PC-3 (cell line): ENCODE measurements at regions of chr12 and their contacts with region 1.

Region 1: DNA sequence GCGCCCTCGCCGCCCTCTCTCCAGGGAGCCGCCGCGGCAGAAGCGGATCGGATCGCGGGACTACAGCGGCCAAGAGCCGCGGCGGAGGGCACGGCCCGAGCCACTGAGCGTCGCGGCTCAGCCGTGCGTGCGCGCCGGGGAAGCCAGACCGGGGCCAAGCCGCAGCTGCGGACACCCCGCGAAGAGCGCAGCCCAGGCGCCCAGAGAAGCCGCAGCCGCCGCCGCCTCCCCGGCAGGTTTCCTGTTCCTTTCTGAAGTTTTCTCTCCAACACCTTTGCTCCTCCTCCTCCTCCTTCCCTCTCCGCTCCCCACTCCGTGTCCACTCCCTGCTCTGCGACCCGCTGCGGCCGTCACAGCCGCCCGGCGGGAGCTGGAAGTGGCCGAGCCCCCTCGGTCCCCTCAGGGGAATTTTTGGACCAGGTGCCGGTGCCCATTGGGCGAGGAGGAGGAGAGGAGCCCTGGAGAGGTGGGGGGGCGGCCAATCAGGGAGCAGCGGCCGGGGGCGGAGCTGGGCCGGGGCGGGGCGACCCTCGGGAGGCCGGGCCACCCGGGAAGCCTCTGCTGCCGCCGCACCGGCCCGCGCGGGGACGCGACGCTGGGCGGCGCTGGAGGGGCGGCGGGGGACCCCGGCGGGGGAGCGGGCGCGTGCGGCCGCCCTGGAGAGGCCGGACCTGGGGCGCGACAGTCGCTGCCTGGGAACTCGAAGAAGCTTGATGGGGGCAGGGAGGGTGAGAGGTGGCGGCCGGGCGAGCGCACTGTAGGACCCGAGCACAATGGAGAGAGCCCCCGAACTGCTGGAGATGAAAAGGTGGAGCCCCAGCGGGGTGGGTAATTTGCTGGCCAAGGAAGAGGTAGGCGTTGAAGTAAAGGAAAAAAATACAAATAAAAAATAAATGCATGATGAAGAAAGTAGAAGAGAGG is at the start of gene ITPR2:
- DNase-seq: peak; percentile 97
- ATAC-seq: peak; percentile 85
- H3K4me3 ChIP-seq: peak within 1 kb of the TSS; percentile 81
- H3K27ac ChIP-seq: peak within 1 kb of the TSS; percentile 53
- H3K4me1 ChIP-seq: peaks cover 6% of the 10 kb centered on the region; the same call in 1 of the 2 replicates
- H3K27me3 ChIP-seq: no peaks in the 10 kb centered on the region
- CTCF ChIP-seq: peak; percentile 40; the same call in 1 of the 2 replicates
- total RNA-seq, gene ITPR2: 4.0 and 10.2 TPM in 2 replicates

Region 2: DNA sequence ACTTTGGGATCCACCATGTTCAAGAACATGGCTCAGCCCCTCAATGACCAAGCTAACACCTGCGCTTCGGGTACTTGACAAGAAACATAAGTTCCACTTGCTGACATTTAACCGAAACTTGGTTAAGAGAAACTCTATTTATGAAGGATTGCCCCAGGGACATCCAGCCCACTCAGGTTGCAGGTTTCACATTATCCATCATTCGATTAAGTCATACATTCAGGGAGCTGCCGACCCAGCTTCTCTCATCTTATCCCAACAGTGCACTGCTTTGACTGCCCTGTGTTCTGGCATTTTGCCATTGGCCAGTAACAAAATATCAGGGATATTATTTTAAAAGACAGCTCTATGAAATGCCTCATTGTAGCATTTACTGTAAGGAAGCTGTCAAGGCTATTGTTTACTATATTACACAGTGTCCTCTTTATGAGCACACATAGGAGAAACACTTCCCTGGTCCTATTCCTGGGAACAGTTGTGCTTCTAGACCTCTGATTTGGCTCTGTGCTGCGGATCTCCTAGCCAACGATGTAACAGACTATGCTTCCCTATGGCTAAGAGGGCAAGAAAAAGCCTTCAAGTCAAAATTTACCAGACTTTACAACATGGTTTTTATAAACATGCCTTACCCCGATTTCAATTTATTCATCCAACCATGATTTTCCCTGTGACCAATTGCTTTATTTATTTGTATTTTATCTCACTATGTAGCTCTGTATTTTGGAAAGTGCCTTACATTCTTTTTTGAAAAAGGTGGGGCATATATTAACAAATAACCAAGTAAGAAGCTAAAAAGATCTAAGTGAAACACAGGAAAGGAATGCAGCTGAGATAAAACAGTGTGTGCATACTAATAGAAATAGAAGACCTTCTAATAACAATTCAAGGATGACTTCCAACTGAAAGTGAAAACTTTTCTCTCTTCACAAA is 109.4 kb before region 1 on chr12:
- CTCF ChIA-PET with region 1: interaction called, 5 read pairs
- POLR2A ChIA-PET with region 1: no interaction called
- intact Hi-C with region 1: loop called (anchors 5 kb)
- DNase-seq: peak; percentile 58
- ATAC-seq: peak; percentile 85
- H3K4me3 ChIP-seq: peak overlapping the region; percentile 1; the same call in 1 of the 2 replicates
- H3K27ac ChIP-seq: no peak overlapping the region
- H3K4me1 ChIP-seq: peaks cover 16% of the 10 kb centered on the region
- H3K27me3 ChIP-seq: no peaks in the 10 kb centered on the region
- CTCF ChIP-seq: no peak

Region 3: DNA sequence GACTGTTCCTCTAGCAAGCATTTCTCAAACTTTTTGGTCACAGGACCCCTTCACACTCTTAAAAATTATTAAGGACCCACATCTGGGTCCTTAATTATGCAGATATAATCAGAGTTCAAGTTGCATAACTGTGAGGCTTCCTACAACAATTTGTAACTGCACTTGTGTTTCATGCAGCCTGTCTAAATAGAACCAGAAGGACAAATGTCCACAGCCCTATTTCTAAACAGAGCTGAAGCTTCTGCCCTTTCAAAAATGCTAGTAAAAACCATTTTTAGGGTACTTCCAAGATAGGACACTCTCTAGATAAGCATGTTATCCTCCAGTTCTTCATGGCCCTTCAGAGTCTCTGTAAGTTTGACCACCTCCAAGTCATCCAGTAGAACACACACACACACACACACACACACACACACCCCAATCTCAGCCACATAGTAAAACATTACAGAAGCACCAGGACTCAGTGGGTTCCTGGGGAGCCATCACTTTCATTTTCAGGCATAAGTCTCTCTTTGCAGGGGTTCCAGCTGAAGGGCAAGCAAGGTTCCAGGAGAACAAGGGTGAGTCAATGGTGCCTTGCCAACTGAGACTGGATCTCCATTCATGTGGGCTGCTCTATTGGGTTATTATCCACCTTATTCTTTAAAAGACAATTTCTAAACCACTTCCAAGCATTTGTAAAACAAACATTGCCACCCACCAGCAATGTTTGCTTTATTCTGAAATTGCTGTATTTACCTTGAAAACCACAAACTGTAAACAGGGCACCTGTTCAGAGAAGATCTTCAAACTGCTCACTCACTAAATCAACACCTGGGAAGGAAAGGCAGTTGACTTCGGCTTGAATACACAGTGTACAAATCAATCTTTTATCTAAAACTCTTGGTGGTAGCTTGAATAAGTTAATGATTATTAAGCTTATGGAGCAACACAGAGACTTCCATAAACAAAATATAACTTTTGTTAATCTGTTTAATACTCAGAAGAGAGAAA is 64.2 kb before region 1 on chr12:
- CTCF ChIA-PET with region 1: no interaction called
- POLR2A ChIA-PET with region 1: interaction called, 4 read pairs
- intact Hi-C with region 1: loop called (anchors 2 kb)
- DNase-seq: peak; percentile 97
- ATAC-seq: peak; percentile 97
- H3K4me3 ChIP-seq: no peak overlapping the region
- H3K27ac ChIP-seq: no peak overlapping the region
- H3K4me1 ChIP-seq: peaks cover 16% of the 10 kb centered on the region
- H3K27me3 ChIP-seq: no peaks in the 10 kb centered on the region
- CTCF ChIP-seq: no peak